Activated CD4-positive, alpha-beta memory T cell treated with anti-CD3 and anti-CD28 coated beads for 36 hours (primary cell): ENCODE measurements at regions of chr20 and their contacts with region 1.

Region 1: DNA sequence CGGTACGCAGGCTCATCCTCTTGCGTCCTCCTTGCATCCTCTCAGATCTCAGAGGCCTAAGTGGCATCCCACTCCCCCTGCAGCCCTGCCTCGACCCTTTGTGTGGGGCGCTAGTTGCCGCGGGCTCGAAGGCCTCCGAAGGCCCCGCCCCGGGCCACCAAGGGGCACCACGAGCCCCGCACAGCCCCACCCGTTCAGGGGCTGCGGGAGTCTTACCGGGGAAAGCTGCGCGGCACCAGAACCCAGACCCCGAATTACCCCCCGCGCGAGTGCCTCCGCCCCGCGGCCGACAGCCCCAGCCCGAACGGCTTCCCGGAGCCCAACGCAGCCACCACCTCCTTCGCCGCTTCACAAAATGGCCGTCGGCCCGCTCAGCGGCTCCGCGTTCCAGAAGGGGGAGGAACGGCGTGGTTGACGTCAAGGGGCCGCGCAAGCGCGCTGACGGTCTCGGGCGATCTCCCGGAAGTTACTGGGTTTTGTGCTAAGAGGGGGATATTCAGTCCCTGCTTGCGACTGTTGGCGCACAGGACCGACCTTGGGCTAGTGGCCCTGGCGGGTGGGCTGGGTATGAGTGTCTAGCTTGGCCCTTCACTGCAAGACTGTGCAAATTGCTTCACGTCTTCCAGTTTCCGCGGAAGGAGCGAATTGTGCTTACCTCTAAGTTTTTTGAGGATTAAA is at the starts of genes CPNE1 and RBM12:
- DNase-seq: peak; percentile 96
- H3K4me3 Mint-ChIP-seq: peak within 1 kb of the TSS; percentile 91
- H3K27ac Mint-ChIP-seq: peak within 1 kb of the TSS; percentile 98
- H3K4me1 Mint-ChIP-seq: peaks cover 40% of the 10 kb centered on the region
- H3K27me3 Mint-ChIP-seq: no peaks in the 10 kb centered on the region
- total RNA-seq, gene CPNE1: 242 to 253 TPM
- total RNA-seq, gene RBM12: 110 to 114 TPM

Region 2: DNA sequence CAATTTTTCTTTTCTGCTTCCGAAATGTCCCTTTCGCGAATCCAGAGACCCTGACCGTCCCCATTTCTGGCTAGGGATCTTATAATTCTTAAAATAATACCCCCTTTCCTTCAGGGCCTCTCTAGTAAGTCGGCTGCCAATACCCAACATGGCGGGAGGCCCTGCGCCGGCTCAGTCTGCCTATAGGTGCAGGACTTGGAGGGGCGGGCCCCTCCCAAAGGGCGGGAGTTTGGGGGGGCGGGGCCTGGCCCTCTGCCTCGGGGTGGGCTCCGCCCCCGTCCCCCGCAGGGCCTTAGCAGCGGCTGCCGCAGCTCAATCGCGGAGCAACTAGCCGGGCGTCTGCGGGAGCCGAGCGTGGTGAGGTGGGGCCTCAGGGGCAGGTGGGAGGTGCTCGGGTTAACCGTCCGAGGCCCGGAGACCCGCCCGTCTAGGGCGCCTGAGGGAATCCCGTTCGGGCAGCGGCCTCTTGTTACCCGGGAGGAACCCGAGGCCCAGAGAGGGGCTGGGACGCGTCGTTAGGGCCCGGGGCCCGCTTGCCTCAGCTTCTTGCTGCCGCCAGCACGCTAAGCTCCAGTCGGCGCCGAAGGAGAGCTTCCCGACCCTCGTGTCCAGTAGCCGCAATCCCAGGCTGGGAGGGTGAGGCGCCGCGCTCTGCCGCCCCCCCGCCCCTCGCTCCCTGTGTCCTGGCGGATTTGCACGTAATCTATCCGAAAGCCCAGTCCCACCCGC is 209.6 kb before region 1 on chr20 and contains the start of gene CEP250:
- CTCF ChIA-PET with region 1: no interaction called
- POLR2A ChIA-PET with region 1: interaction called, 7 read pairs
- intact Hi-C with region 1: loop called (anchors 5 kb)
- DNase-seq: peak; percentile 95
- H3K4me3 Mint-ChIP-seq: peak within 1 kb of the TSS; percentile 88
- H3K27ac Mint-ChIP-seq: peak within 1 kb of the TSS; percentile 97
- H3K4me1 Mint-ChIP-seq: peaks cover 28% of the 10 kb centered on the region
- H3K27me3 Mint-ChIP-seq: no peaks in the 10 kb centered on the region
- total RNA-seq, gene CEP250: 47.2 to 60.8 TPM

Region 3: DNA sequence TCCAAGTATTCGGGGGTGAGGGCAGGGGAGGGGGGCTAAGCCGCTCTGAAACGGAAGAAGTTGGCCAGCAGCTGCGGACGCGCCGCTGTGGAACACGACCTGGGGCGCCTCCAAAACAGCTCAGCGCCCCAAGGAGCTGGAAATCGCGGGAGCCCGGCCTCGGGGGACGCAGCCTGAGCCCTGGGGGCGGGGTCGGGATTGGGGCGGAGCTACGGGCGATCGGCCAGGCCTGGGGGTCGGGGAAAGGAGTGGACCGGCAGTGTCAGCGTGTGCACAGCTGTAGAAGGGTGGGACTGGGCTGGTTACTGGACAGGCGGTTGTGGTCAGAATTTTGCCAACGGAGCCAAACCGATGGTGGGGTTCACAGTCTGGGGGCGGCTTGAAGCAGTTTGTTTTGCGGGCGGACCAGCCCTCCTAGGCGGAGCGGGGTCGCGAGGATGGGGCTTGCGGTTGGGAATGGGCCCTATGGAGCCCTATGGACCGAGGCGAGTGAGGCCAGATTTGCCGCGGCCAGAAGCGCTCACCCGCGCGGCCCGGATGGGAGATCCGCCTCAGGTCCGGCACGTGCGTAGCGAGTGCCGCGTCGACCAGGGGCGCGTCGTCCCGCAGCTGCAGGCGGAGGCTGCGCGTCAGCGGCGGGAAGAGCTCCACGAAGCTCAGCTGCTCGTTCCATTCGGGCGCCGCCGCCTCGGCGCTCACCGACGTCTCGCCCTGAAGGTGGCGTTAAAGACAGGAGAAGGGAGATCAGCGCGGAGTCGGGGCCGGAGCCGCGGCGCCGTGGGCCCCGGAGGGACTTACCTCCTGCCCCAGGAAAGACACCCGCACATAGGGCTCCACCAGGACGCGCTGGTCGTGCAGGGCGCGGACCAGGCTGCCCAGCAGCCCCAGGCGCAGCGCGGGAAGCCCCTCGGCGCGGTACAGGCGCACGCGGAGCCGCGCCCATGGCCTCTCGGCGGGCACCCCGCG is 63.4 kb before region 1 on chr20:
- CTCF ChIA-PET with region 1: interaction called, 10 read pairs
- POLR2A ChIA-PET with region 1: interaction called, 3 read pairs
- intact Hi-C with region 1: no loop called
- DNase-seq: peak; percentile 89
- H3K4me3 Mint-ChIP-seq: peak overlapping the region; percentile 67
- H3K27ac Mint-ChIP-seq: no peak overlapping the region
- H3K4me1 Mint-ChIP-seq: peaks cover 9% of the 10 kb centered on the region
- H3K27me3 Mint-ChIP-seq: peaks cover 18% of the 10 kb centered on the region

Region 4: DNA sequence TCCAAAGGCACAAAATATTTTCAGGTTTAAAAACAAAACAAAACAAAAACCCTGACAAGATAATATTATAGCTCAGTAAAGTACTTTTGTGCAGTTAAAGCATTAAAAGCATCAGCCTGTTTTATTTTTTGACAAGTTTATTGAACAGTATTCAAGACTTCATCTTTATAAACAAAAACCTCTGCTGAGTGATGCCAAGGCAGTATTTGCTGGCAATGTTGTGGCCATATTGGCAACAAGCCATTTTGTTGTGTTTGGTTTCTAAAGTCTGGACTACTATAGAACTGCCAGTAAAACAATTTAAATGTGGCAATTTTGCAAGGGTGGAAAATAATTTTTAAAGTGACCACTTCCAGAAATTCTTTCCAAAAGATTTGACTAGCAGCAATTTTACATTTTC is 15.8 kb before region 1 on chr20:
- CTCF ChIA-PET with region 1: interaction called, 4 read pairs
- POLR2A ChIA-PET with region 1: interaction called, 6 read pairs
- intact Hi-C with region 1: loop called (anchors 1 kb)
- DNase-seq: no peak
- H3K4me3 Mint-ChIP-seq: no peak overlapping the region
- H3K27ac Mint-ChIP-seq: no peak overlapping the region
- H3K4me1 Mint-ChIP-seq: peaks cover 70% of the 10 kb centered on the region
- H3K27me3 Mint-ChIP-seq: no peaks in the 10 kb centered on the region

Region 5: DNA sequence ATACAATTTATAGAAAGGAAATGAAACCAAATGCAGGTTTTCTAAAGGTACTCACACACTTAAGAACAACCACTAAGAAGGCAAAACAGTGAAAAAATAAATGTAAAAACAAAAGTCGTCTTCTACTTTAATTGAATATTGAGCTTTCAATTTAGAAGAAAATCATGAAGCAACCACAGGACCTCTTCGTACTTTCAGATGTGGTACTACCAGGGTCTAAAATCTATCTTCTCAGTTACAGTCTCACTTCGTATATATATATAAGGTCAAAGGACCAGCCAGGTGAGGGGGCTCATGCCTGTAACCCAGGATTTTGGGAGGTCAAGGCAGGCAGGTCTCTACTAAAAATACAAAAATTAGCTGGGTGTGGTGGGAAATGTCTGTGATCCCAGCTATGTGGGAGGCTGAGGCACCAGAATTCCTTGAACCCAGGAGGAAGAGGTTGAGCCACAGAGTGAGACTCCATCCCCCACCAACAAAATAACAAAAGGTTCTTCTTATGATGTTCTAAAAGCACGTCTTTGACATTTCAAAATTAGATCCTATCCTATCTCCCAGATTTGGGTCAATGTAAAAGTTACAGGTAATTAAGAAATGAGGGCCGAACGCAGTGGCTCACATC is 47.0 kb after region 1 on chr20:
- CTCF ChIA-PET with region 1: interaction called, 3 read pairs
- POLR2A ChIA-PET with region 1: no interaction called
- intact Hi-C with region 1: loop called (anchors 2 kb)
- DNase-seq: no peak
- H3K4me3 Mint-ChIP-seq: peak overlapping the region; percentile 28
- H3K27ac Mint-ChIP-seq: peak overlapping the region; percentile 83
- H3K4me1 Mint-ChIP-seq: peaks cover 56% of the 10 kb centered on the region
- H3K27me3 Mint-ChIP-seq: no peaks in the 10 kb centered on the region

Region 6: DNA sequence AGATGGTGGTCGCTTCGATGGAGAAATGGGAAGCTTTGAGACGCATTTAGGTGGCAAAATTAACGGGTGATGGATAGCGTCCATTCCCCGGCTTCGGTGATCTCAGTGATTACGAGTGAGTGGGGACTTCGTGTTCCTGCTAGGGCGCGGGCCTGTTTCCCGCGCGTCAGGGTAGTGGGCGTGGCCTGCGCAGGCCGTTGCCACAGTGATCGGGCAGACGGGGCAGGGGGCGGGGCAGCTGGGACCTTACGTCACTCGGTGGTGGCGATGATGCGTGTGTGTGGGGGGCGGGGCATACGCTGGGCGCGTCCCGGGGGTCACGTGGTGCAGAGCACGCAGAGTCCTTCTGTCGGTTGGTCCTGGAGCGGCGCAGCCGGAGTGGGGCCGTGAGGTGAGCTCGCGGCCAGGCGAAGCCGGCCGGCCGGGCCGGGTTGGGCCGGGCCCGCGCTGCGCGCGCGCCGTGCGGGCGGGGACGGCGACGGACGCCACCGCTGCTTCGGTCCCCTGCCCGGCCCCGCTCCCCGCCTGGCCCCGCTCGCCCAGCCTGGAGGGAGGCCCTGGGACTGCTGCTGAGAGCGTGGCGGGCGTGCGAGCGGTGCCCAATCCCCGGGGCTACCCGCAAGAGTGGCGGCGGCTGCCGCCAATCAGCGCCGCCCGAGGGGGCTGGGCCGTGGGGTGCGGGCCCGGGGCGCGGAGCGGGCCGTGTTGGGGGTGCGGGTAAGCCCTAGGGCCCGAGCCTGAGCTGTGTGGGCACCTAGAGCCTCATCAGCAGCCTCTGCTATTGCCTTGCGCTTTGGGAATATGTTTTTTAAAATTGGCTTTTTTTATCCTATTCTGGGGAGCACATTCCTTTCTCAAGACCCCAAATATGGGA is 107.2 kb after region 1 on chr20 and contains the start of gene PHF20:
- CTCF ChIA-PET with region 1: no interaction called
- POLR2A ChIA-PET with region 1: interaction called, 6 read pairs
- intact Hi-C with region 1: loop called (anchors 5 kb)
- DNase-seq: peak; percentile 100
- H3K4me3 Mint-ChIP-seq: peak within 1 kb of the TSS; percentile 82
- H3K27ac Mint-ChIP-seq: peak within 1 kb of the TSS; percentile 85
- H3K4me1 Mint-ChIP-seq: peaks cover 64% of the 10 kb centered on the region
- H3K27me3 Mint-ChIP-seq: no peaks in the 10 kb centered on the region
- total RNA-seq, gene PHF20: 49.1 to 50.5 TPM

Region 7: DNA sequence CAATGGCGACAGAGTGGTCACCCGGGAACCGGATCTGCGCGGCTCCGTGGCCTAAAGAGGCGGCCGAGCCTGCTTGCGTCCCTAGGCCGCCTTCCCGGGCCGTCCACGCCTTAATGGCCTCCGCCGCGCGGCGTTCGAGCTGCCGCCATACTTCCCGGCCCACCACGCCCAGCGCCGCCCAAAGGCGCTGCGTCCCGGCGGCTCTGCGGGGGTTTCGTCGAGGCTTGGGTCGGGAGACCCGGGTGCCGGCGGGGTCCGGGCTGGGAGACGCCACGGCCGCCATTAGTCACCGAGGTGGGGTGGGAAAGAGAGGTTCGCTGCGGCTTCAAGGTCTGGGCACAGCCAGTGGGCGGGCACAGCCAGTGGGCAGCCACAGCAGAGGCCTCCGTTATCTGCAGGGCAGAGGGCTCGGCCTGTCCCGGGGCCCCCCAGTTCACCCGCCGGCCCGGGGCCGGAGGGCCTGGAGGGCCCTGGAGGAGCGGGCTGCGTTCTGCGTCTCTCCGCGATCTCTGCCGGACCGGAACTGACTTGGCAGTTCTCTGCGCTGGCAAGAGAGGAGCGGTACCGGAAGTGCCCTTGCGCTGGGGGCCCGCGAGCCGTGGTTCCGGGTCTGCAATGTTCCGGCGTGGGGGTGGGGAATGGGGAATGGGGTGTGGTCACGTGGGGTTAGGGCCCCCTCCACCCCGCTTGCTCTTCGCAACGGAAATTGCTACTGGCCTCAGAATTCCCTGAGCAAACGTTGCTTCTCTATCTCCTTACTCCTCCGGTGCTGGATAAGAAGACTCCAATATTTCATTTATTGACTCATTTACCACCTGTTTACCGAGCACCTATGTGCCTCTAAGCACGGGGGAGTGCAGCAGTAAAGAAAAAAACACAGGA is 386.0 kb after region 1 on chr20:
- CTCF ChIA-PET with region 1: no interaction called
- POLR2A ChIA-PET with region 1: no interaction called
- intact Hi-C with region 1: loop called (anchors 2 kb)
- DNase-seq: peak; percentile 95
- H3K4me3 Mint-ChIP-seq: peak overlapping the region; percentile 94
- H3K27ac Mint-ChIP-seq: peak overlapping the region; percentile 94
- H3K4me1 Mint-ChIP-seq: peaks cover 32% of the 10 kb centered on the region
- H3K27me3 Mint-ChIP-seq: peaks cover 6% of the 10 kb centered on the region